Heart left ventricle (tissue), 16 donors: ENCODE measurements at regions of chr19 and their contacts with region 1.

Region 1: GRCh38 chr19:39671738-39672363 is 16.1 kb downstream of the LGALS16 start:
- DNase-seq: no peak
- ATAC-seq: peak in 3 of 4 donors; percentile 57 to 62 (median 61)
- H3K4me3 ChIP-seq: no peak overlapping the region
- H3K27ac ChIP-seq: no peak overlapping the region
- H3K4me1 ChIP-seq: no peaks in the 10 kb centered on the region
- H3K27me3 ChIP-seq: peaks cover 0 to 8% (median 0%) of the 10 kb centered on the region in 9 donors
- CTCF ChIP-seq: peak; percentile 21 to 58 (median 46)
- POLR2A ChIP-seq: no peak

Region 2: DNA sequence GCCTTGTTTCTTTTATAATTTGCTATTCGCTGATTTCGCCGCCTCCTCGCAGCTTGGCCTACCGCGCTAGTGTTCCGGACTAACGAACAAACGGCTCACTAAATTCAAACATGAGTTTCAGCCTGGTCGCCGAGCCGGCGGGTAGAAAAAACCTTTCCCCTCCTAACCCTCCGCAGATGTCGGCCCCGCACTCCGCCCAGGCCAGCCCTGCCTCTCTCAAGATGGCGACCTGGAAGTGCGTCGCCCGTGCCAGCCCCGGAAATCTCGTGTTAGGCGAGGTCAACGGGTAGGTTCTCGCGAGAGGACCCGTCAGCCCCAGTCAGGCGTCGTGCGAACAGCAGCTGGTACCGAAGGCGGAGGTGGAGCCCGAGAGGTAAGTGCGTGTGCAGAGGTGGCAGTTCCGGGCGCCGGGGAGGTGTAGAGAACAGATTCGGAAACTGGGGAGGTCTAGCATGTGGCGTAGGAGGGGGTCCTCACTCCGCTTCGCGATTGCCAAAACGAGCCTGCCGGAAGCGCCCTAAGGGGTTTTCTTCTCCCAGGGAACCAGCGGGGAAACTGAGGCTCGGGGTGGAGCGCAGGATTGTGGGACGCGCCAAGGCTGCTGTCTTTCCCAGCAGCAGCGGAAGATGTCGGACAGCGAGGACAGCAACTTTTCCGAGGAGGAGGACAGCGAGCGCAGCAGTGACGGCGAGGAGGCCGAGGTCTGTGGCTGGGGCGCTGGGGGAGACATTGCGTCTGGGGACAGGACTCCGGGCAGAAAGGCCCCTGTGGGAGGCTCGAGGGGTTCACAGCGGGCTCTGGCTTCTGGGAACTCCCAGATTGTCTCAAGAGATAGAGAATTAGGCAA is 226.4 kb before region 1 on chr19 and contains the start of gene SUPT5H:
- intact Hi-C with region 1: loop called in 1 of 10 experiments (anchors 5 kb)
- DNase-seq: peak; percentile 97 to 98 (median 97)
- ATAC-seq: peak; percentile 98 to 99 (median 98)
- H3K4me3 ChIP-seq: peak within 1 kb of the TSS; percentile 65 to 98 (median 86)
- H3K27ac ChIP-seq: peak within 1 kb of the TSS; percentile 86 to 96 (median 92)
- H3K4me1 ChIP-seq: peaks cover 8 to 51% (median 36%) of the 10 kb centered on the region in 12 donors
- H3K27me3 ChIP-seq: no peaks in the 10 kb centered on the region
- CTCF ChIP-seq: peak in 1 of 12 donors; percentile 12
- POLR2A ChIP-seq: peak; percentile 34 to 91
- total RNA-seq, gene SUPT5H: 64.2 to 113 (median 81.7) TPM

Region 3: GRCh38 chr19:39550197-39550596 is 121.7 kb before region 1 on chr19:
- intact Hi-C with region 1: loop called (anchors 2 to 5 kb)
- DNase-seq: no peak
- ATAC-seq: no peak
- H3K4me3 ChIP-seq: no peak overlapping the region
- H3K27ac ChIP-seq: no peak overlapping the region
- H3K4me1 ChIP-seq: peaks cover 0 to 16% (median 0%) of the 10 kb centered on the region in 12 donors
- H3K27me3 ChIP-seq: peaks cover 0 to 5% (median 0%) of the 10 kb centered on the region in 9 donors
- CTCF ChIP-seq: no peak
- POLR2A ChIP-seq: no peak

Region 4: GRCh38 chr19:39557441-39558151 is 114.3 kb before region 1 on chr19:
- intact Hi-C with region 1: loop called in 8 of 10 experiments (anchors 2 to 5 kb)
- DNase-seq: no peak
- ATAC-seq: peak in 2 of 4 donors; percentile 31 to 44
- H3K4me3 ChIP-seq: peak overlapping the region in 2 of 12 donors; percentile 16 to 17
- H3K27ac ChIP-seq: peak overlapping the region in 1 of 12 donors; percentile 89
- H3K4me1 ChIP-seq: peaks cover 0 to 45% (median 0%) of the 10 kb centered on the region in 12 donors
- H3K27me3 ChIP-seq: peaks cover 0 to 3% (median 0%) of the 10 kb centered on the region in 9 donors
- CTCF ChIP-seq: no peak
- POLR2A ChIP-seq: no peak